ENCODE measurements at regions of chrX and their contacts with region 1.

Region 1: DNA sequence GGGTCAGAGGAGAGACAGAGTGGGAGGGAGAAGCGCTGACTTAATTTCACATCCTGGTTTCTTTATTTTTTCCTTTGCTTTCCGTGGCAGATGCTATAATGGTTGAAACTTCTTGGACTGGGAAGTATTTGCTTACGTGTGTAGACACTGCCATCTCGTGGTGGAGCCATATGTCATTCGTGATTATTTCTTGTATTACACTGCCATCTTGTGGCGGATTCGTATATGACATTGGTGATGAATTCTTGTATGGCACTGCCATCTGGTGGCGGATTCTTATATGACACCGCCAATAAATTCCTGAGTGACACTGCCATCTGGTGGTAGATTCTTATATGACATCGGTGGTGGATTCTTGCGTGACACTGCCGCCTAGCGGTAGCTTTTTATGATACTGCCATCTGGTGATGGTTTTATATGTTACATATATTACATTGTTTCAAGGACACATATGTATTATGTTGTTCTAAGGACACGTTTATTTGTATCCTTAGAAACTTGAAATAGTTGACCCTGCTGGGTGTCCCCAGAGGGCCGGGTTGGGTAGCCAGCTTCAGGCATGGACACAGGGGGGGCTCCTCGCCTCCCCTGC is 37.3 kb upstream of the CLCN4 start:
- DNase-seq: peak in 4 of 5 donors; percentile 53 to 75 (median 64)
- ATAC-seq: peak; percentile 44 to 80 (median 66)
- H3K4me3 ChIP-seq: no peak overlapping the region
- H3K27ac ChIP-seq: peak overlapping the region in 4 of 12 donors; percentile 0 to 45 (median 8)
- H3K4me1 ChIP-seq: peaks cover 0 to 32% (median 7%) of the 10 kb centered on the region in 12 donors
- H3K27me3 ChIP-seq: no peaks in the 10 kb centered on the region
- CTCF ChIP-seq: peak; percentile 97 to 100 (median 100)
- POLR2A ChIP-seq: no peak

Region 2: GRCh38 chrX:8743126-8743732 is 1376.3 kb before region 1 on chrX:
- intact Hi-C with region 1: loop called in 1 of 10 experiments (anchors 10 kb)
- DNase-seq: peak in 4 of 5 donors; percentile 25 to 62 (median 47)
- ATAC-seq: no peak
- H3K4me3 ChIP-seq: no peak overlapping the region
- H3K27ac ChIP-seq: no peak overlapping the region
- H3K4me1 ChIP-seq: no peaks in the 10 kb centered on the region
- H3K27me3 ChIP-seq: no peaks in the 10 kb centered on the region
- CTCF ChIP-seq: peak; percentile 45 to 76 (median 52)
- POLR2A ChIP-seq: no peak

Region 3: DNA sequence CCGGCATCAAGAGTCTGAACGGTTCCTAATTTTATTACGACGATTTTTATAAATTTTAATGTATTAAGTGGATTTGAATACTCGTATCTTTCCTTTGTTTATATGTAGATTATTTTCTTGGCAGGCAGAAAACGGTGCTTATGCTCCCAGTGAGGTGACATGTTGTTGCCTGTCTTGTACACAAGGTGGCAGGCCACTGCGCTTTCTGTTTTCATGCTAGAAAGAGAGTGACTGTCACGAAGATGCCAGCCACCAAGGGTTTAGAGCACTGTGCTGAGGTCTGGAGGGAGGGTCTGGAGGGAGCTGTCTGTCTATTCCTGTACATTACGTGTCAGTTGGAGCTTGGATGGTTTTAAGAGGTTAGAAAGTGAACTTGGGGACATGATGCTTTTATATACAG is 245.5 kb before region 1 on chrX:
- intact Hi-C with region 1: loop called in 2 of 10 experiments (anchors 1 to 5 kb)
- DNase-seq: peak in 2 of 5 donors; percentile 13 to 48
- ATAC-seq: peak in 2 of 4 donors; percentile 47 to 56
- H3K4me3 ChIP-seq: no peak overlapping the region
- H3K27ac ChIP-seq: no peak overlapping the region
- H3K4me1 ChIP-seq: no peaks in the 10 kb centered on the region
- H3K27me3 ChIP-seq: peaks cover 0 to 12% (median 0%) of the 10 kb centered on the region in 9 donors
- CTCF ChIP-seq: peak; percentile 21 to 62 (median 45)
- POLR2A ChIP-seq: no peak

Region 4: GRCh38 chrX:9988762-9989161 is 130.7 kb before region 1 on chrX:
- intact Hi-C with region 1: loop called in 1 of 10 experiments (anchors 2 kb)
- DNase-seq: no peak
- ATAC-seq: no peak
- H3K4me3 ChIP-seq: no peak overlapping the region
- H3K27ac ChIP-seq: no peak overlapping the region
- H3K4me1 ChIP-seq: no peaks in the 10 kb centered on the region
- H3K27me3 ChIP-seq: no peaks in the 10 kb centered on the region
- CTCF ChIP-seq: peak in 11 of 12 donors; percentile 11 to 48 (median 34)
- POLR2A ChIP-seq: no peak

Region 5: DNA sequence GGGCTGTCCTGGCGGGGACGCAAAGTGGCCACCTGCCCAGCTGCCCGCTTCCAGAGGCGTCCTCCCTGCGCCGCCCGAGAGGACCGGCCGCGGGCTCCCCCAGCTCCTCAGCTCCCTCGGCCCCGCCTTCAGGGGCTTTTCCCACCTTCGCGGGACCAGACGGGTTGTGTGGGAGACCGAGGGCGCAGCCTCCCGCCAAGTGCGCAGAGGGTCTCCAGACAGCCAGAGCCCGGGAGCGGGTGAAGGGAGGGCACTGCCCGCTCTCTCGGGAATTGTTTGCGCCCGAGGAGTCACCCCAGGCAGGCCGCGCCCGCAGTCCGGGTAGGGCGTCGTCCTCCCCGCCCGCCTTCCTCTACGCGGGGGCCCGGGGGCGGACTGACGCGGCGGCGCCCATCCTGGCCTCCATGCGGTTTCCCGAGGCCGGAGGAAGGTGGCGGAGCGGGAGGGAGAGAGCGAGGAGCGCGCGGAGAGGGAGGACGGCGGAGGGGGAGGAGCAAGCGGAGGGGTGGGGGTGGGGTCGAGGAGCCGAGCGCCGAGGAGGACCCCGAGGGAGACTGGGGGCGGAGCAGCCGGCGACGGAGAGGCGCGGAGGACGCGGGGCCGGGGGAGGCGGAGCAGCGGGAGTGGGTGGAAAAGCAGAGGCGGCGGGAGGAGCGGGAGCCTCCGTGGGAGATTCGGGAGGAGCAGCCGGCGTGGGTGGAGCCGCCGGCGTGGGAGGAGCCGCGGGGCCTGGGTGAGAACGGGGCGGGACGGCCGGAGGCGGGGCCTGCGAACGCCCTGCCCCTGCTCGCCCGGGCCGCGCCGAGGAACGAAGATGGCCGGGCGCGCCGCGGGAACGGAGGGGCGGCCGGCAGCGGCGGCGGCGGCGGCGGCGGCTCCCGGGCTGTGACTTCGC is 104.8 kb before region 1 on chrX:
- intact Hi-C with region 1: loop called in 6 of 10 experiments (anchors 5 kb)
- DNase-seq: peak; percentile 89 to 95 (median 92)
- ATAC-seq: peak; percentile 73 to 95 (median 92)
- H3K4me3 ChIP-seq: peak overlapping the region; percentile 41 to 80 (median 64)
- H3K27ac ChIP-seq: peak overlapping the region; percentile 82 to 96 (median 89)
- H3K4me1 ChIP-seq: peaks cover 0 to 38% (median 21%) of the 10 kb centered on the region in 12 donors
- H3K27me3 ChIP-seq: peaks cover 0 to 34% (median 0%) of the 10 kb centered on the region in 9 donors
- CTCF ChIP-seq: no peak
- POLR2A ChIP-seq: peak in 1 of 2 donors; percentile 51

Region 6: GRCh38 chrX:10098270-10098713 is 21.2 kb before region 1 on chrX:
- intact Hi-C with region 1: no loop called
- DNase-seq: no peak
- ATAC-seq: peak in 2 of 4 donors; percentile 44 to 45
- H3K4me3 ChIP-seq: peak overlapping the region in 8 of 12 donors; percentile 2 to 49 (median 42)
- H3K27ac ChIP-seq: peak overlapping the region; percentile 1 to 80 (median 44)
- H3K4me1 ChIP-seq: peaks cover 0 to 30% (median 8%) of the 10 kb centered on the region in 12 donors
- H3K27me3 ChIP-seq: no peaks in the 10 kb centered on the region
- CTCF ChIP-seq: no peak
- POLR2A ChIP-seq: no peak

Region 7: DNA sequence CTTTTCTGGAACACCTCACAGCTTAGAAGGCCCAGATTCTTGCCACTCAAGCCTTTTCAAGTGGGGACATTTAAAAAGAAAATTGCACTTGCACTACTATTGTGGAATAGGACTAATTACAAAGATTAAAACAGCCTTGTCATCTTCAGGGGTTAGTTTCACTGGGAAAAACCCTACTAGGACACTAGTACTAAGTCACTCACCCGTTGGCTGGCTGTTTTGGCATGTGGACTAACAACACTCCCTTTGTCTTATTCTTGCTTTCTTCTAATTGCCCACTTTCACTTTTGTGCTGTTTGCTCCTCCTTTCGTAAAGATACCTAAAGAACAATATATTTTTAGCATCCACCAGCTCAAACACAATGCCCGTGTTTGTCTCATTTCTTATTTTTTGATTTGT is 701.8 kb after region 1 on chrX:
- intact Hi-C with region 1: no loop called
- DNase-seq: no peak
- ATAC-seq: no peak
- H3K4me3 ChIP-seq: no peak overlapping the region
- H3K27ac ChIP-seq: peak overlapping the region in 1 of 12 donors; percentile 11
- H3K4me1 ChIP-seq: no peaks in the 10 kb centered on the region
- H3K27me3 ChIP-seq: peaks cover 0 to 4% (median 0%) of the 10 kb centered on the region in 9 donors
- CTCF ChIP-seq: no peak
- POLR2A ChIP-seq: no peak

Measured in heart left ventricle (tissue), 16 donors.